PC-9 (cell line): ENCODE measurements at regions of chr12 and their contacts with region 1.

Region 1: DNA sequence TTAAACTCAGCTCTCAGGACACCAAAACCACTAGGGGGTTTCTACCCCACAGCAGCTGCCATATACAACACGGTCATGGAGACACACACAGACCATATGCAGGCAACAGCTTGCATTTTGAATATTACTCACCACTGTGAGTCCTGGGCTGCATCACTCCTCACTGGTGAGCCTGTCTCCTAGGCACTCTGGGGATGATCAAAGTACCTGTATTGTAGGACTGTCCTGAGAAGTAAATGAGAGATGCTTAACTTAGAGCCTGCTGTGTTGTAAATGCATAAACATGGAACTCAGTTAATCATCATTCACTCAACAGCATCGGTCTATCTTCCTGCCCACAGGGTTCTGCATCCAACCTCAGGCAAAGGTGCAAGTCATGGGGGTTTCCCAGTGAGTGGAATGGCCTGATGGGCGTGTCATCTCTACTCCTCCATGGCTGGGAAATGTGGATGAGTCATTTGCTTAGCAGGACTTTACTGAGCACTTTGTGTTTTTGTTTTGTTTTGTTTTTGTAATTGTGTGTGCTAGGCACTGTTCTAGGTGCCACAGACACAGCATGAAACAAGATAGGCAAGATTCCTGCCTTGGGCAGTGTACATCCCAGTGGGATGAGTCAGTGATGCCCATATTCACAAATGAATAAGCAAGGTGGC is 1141.2 kb upstream of the TMEM132C start:
- DNase-seq: peak; percentile 86 to 100
- H3K4me3 ChIP-seq: no peak overlapping the region
- H3K27ac ChIP-seq: peak overlapping the region; percentile 94
- H3K4me1 ChIP-seq: peaks cover 32% of the 10 kb centered on the region
- H3K27me3 ChIP-seq: no peaks in the 10 kb centered on the region
- CTCF ChIP-seq: no peak

Region 2: DNA sequence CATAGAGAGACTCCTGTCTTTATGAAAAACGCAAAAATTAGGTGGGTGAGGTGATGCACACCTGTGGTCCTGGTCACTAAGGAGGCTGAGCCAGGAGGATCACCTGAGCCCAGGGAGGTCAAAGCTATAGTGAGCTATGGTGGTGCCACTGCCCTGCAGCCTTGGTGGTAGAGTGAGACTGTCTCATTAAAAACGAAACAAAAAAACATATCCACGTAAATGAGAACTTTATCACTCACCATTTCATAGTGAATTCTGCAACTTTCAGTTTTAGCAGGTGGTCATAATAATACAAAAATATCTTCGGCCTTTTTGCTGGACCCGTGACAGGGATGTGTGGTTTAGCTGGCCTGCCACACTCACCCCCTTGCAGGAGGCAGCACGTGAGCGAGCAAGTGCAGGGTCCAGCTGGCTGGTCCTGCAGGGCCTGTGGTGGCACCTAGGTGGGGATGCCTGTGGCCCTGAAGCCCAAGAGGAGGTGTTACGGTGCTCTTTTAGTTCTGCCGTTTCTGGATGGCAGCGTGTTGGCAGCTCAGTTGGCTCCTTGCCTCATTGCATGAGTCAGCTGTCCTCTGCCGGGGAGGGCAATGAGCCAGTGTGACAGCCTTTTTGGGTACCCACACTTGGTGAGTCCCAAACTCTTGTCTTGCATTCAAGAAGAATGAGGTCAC is 189.4 kb before region 1 on chr12:
- CTCF ChIA-PET with region 1: no interaction called
- POLR2A ChIA-PET with region 1: no interaction called
- intact Hi-C with region 1: loop called (anchors 1 kb)
- DNase-seq: peak; percentile 46 to 72
- H3K4me3 ChIP-seq: no peak overlapping the region
- H3K27ac ChIP-seq: no peak overlapping the region
- H3K4me1 ChIP-seq: 0 out of 2 replicates have a peak, but pooled peaks cover 8% of the 10 kb centered on the region
- H3K27me3 ChIP-seq: no peaks in the 10 kb centered on the region
- CTCF ChIP-seq: no peak

Region 3: GRCh38 chr12:126974779-126975178 is 151.0 kb before region 1 on chr12:
- CTCF ChIA-PET with region 1: no interaction called
- POLR2A ChIA-PET with region 1: no interaction called
- intact Hi-C with region 1: no loop called
- DNase-seq: no peak
- H3K4me3 ChIP-seq: no peak overlapping the region
- H3K27ac ChIP-seq: no peak overlapping the region
- H3K4me1 ChIP-seq: no peaks in the 10 kb centered on the region
- H3K27me3 ChIP-seq: no peaks in the 10 kb centered on the region
- CTCF ChIP-seq: no peak

Region 4: GRCh38 chr12:127083008-127083949 is 42.5 kb before region 1 on chr12:
- CTCF ChIA-PET with region 1: no interaction called
- POLR2A ChIA-PET with region 1: no interaction called
- intact Hi-C with region 1: loop called (anchors 1 kb)
- DNase-seq: peak in 1 of 2 experiments; percentile 81
- H3K4me3 ChIP-seq: peak overlapping the region; percentile 55
- H3K27ac ChIP-seq: peak overlapping the region; percentile 88
- H3K4me1 ChIP-seq: peaks cover 17% of the 10 kb centered on the region
- H3K27me3 ChIP-seq: no peaks in the 10 kb centered on the region
- CTCF ChIP-seq: no peak

Region 5: DNA sequence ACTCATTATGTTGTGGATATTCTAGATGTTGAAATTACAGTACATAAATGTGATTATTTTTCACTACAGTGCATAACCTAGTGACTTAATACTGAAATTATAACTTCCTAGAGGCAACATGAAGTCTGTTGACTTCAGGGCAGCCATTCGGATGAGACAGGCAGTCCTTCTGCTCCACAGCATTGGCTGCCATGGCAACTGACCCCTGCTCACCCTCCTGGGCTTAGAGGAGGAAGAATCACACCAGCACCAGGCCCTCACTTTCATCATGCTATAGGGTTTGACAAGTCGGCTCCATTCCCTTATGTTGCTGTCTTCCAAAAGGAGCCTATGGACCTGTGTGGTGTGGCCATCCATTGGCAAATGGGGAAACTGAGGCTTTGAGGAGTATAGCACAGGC is 907.7 kb after region 1 on chr12:
- CTCF ChIA-PET with region 1: no interaction called
- POLR2A ChIA-PET with region 1: no interaction called
- intact Hi-C with region 1: no loop called
- DNase-seq: no peak
- H3K4me3 ChIP-seq: no peak overlapping the region
- H3K27ac ChIP-seq: no peak overlapping the region
- H3K4me1 ChIP-seq: no peaks in the 10 kb centered on the region
- H3K27me3 ChIP-seq: peaks cover 16% of the 10 kb centered on the region; the same call in 1 of the 2 replicates
- CTCF ChIP-seq: no peak